Pancreas (tissue), 10 donors: ENCODE measurements at regions of chr12 and their contacts with region 1.

Region 1: GRCh38 chr12:110590806-110591326 is 7.7 kb upstream of the PPTC7 start:
- DNase-seq: no peak
- ATAC-seq: peak in 3 of 4 donors; percentile 43 to 73 (median 72)
- H3K4me3 ChIP-seq: no peak overlapping the region
- H3K27ac ChIP-seq: peak overlapping the region in 2 of 4 donors; percentile 66 to 74
- H3K4me1 ChIP-seq: peaks cover 14 to 21% (median 14%) of the 10 kb centered on the region in 3 donors
- H3K27me3 ChIP-seq: no peaks in the 10 kb centered on the region
- CTCF ChIP-seq: no peak

Region 2: GRCh38 chr12:110199339-110200123 is 391.3 kb before region 1 on chr12:
- intact Hi-C with region 1: no loop called
- DNase-seq: no peak
- ATAC-seq: no peak
- H3K4me3 ChIP-seq: no peak overlapping the region
- H3K27ac ChIP-seq: no peak overlapping the region
- H3K4me1 ChIP-seq: no peaks in the 10 kb centered on the region
- H3K27me3 ChIP-seq: no peaks in the 10 kb centered on the region
- CTCF ChIP-seq: no peak

Region 3: DNA sequence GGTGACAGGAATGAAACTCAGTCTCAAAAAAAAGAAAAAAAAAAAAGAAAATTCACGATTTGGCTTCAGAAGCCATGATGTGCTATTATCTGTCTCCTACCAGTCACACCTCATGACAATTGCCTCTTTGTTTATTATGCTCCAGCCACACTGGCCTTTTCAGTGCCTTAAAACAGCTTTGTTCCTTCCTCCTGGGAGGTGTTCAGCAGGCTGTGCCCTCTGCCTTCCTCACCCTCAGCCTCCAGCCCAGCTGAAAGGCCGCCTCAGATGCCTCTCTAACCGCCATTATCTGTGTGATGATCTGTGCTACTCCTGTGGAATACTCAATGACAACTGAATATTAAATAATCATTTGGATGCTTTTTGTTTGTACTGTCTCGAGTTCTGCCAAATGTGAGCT is 132.1 kb before region 1 on chr12:
- intact Hi-C with region 1: no loop called
- DNase-seq: no peak
- ATAC-seq: no peak
- H3K4me3 ChIP-seq: no peak overlapping the region
- H3K27ac ChIP-seq: no peak overlapping the region
- H3K4me1 ChIP-seq: no peaks in the 10 kb centered on the region
- H3K27me3 ChIP-seq: no peaks in the 10 kb centered on the region
- CTCF ChIP-seq: no peak

Region 4: GRCh38 chr12:110513842-110514241 is 77.0 kb before region 1 on chr12:
- intact Hi-C with region 1: loop called in 1 of 3 experiments (anchors 10 kb)
- DNase-seq: no peak
- ATAC-seq: no peak
- H3K4me3 ChIP-seq: no peak overlapping the region
- H3K27ac ChIP-seq: no peak overlapping the region
- H3K4me1 ChIP-seq: no peaks in the 10 kb centered on the region
- H3K27me3 ChIP-seq: no peaks in the 10 kb centered on the region
- CTCF ChIP-seq: no peak

Region 5: GRCh38 chr12:110543252-110543959 is 47.5 kb before region 1 on chr12:
- intact Hi-C with region 1: loop called in 1 of 3 experiments (anchors 10 kb)
- DNase-seq: peak; percentile 68 to 89 (median 84)
- ATAC-seq: peak; percentile 85 to 96 (median 92)
- H3K4me3 ChIP-seq: no peak overlapping the region
- H3K27ac ChIP-seq: peak overlapping the region; percentile 3 to 70 (median 47)
- H3K4me1 ChIP-seq: peaks cover 18 to 21% (median 19%) of the 10 kb centered on the region in 3 donors
- H3K27me3 ChIP-seq: no peaks in the 10 kb centered on the region
- CTCF ChIP-seq: no peak